Aorta (tissue), 5 donors: ENCODE measurements at regions of chr2 and their contacts with region 1.

Region 1: DNA sequence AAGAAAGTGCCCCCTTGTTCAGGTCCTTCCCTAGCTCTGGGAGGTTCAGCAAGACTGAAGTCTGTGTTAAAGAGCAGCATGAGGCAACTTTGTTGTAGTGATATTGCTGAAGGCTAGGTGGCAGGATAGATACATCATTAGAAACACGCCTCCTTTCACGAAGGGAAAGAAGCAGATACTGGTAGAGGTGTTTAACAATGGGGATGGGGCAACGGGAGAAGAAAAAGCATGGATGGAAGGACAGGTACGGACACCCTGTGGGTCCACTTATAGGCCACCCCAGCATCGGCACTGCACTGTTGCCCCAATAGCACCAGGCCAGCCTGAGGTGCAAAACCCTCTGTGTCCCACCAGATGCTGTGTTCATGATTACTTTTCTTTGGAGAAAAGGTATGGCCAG is 3.5 kb upstream of the IGFBP5 start:
- DNase-seq: peak in 1 of 2 donors; percentile 49
- ATAC-seq: peak; percentile 49
- H3K4me3 ChIP-seq: no peak overlapping the region
- H3K27ac ChIP-seq: no peak overlapping the region
- H3K4me1 ChIP-seq: peaks cover 0 to 7% of the 10 kb centered on the region in 2 donors
- H3K27me3 ChIP-seq: no peaks in the 10 kb centered on the region

Region 2: DNA sequence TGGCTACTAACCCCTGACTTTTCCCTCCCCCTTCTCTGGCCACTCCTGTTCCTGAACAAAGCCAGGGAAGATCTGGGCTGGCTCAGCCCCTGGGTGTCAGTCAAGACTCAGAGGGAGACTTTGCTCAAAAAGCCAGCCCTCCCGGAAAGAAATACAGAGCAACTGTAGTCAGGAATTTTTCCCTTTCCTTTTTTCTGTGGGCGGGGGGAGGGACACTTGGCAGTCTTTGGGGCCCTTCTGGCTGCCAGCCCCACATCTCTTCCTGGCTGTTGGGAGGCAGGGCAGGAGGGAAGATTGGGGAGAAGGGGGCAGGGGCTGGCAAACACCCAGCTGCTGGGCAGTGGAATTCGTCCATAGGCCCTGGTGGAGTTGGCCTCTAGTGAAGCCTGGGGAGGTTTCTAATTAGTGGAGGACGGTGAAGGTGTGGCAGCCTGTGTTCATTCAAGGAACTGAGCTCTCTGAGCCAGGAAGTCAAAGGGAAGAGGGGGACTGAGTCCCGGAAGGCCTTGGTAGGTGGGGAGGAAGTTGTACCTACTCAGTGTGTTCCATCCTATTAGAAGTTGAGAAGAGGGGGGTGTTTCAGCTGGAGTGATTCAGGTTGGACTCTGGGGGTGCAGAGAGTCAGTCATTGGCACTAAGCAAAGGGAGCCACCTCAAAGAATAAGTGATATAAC is 54.8 kb before region 1 on chr2:
- intact Hi-C with region 1: no loop called
- DNase-seq: peak; percentile 69 to 76
- ATAC-seq: no peak
- H3K4me3 ChIP-seq: no peak overlapping the region
- H3K27ac ChIP-seq: peak overlapping the region; percentile 58 to 62
- H3K4me1 ChIP-seq: peaks cover 7 to 13% of the 10 kb centered on the region in 2 donors
- H3K27me3 ChIP-seq: no peaks in the 10 kb centered on the region

Region 3: DNA sequence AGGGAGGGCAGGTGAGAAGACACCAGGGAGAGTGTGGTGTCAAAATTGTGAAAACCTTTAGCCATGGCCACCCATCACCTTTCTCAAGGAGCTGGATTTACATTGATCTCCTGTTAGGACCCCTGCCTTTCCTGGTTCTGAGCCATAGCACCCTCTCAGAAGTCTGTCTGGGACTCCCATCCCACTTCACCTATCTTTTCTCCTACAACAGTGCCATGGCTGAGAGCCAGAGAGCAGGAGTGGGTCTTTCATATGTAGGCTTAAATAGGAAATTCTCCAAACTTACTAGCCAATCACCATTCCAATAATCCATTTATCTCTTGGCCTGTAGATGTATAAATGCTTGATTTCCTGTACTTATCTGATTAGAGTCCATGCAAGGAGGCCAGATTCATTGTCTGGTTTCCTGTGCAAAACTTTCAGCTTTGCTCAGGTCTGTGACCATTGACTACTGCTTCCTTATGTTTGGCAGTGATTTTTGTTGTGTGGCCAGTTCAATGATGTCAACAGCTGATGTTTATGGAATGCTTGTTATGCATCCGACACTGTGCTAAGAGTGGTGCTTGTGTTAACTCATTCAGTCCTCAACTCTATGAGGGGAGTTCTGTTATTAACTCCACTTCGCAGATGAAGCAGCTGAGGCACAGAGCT is 54.1 kb after region 1 on chr2:
- intact Hi-C with region 1: no loop called
- DNase-seq: no peak
- ATAC-seq: no peak
- H3K4me3 ChIP-seq: no peak overlapping the region
- H3K27ac ChIP-seq: no peak overlapping the region
- H3K4me1 ChIP-seq: no peaks in the 10 kb centered on the region
- H3K27me3 ChIP-seq: no peaks in the 10 kb centered on the region

Region 4: GRCh38 chr2:216880509-216881184 is 181.8 kb after region 1 on chr2:
- intact Hi-C with region 1: loop called in 1 of 2 experiments (anchors 5 kb)
- DNase-seq: peak in 1 of 2 donors; percentile 78
- ATAC-seq: peak; percentile 73
- H3K4me3 ChIP-seq: no peak overlapping the region
- H3K27ac ChIP-seq: no peak overlapping the region
- H3K4me1 ChIP-seq: no peaks in the 10 kb centered on the region
- H3K27me3 ChIP-seq: no peaks in the 10 kb centered on the region

Region 5: GRCh38 chr2:217105733-217106649 is 407.1 kb after region 1 on chr2:
- intact Hi-C with region 1: loop called (anchors 5 kb)
- DNase-seq: peak; percentile 80 to 88
- ATAC-seq: peak; percentile 76
- H3K4me3 ChIP-seq: no peak overlapping the region
- H3K27ac ChIP-seq: peak overlapping the region; percentile 95 to 99
- H3K4me1 ChIP-seq: peaks cover 0 to 5% of the 10 kb centered on the region in 2 donors
- H3K27me3 ChIP-seq: no peaks in the 10 kb centered on the region

Region 6: DNA sequence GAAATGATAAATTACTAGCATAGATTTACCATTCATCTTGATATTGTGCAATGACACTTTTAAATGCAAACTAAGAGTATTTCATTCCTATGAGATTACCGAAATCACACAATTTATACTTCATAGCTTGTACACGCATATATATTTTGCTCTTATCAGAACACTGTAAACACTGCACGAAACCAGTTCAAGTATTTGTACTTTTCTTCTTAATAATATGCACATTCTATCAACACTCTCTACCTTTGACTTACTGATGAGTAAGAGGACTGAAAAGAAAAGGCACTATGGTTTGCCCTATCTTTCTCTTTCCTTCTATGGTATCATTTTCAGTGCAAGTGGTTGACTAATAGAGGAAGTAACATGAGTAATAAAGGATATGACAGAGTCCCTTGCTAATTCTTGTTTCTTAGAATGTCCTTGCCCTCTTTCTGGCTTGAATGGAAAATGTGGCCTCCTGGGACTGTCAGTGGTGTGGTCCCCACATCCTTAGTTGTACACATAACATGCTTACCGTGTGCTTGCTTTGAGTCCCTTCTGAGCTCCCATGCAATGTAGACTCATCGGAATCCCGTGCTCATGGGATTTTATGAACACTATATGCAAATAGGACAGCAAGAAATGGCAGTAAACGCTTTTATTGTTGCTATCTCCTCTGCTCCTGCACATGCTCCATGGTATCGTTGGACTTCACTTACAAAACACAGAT is 524.5 kb after region 1 on chr2:
- intact Hi-C with region 1: loop called in 1 of 2 experiments (anchors 10 kb)
- DNase-seq: peak in 1 of 2 donors; percentile 66
- ATAC-seq: peak; percentile 66
- H3K4me3 ChIP-seq: no peak overlapping the region
- H3K27ac ChIP-seq: peak overlapping the region; percentile 11 to 21
- H3K4me1 ChIP-seq: peaks cover 4 to 6% of the 10 kb centered on the region in 2 donors
- H3K27me3 ChIP-seq: no peaks in the 10 kb centered on the region

Region 7: DNA sequence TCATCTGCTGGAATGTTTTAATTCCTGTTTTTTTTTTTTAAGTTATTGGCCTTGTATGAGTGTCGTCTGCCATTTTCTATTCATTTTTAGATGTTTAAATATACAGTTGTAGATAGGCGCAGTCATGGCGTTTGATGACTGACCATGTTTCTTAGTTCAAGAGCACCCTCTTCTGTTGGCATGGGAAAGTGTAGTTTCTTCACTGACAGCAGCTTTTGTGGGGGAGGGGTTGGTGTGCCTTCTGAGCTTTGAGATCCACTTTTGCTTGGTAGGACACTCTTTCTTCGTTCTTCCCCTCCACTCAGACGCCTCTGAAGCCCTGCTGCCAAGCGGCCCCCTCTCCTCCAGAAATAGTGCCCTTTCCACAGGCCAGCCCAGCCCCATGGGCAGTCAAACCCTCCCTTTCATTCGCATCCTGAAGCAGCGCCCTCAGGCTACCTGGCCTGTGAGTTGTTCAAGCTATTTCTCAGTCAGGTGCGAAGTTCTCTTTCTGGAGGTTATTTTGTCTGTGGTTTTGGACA is 811.9 kb after region 1 on chr2:
- intact Hi-C with region 1: loop called (anchors 2 to 5 kb)
- DNase-seq: peak in 1 of 2 donors; percentile 57
- ATAC-seq: peak; percentile 89
- H3K4me3 ChIP-seq: no peak overlapping the region
- H3K27ac ChIP-seq: no peak overlapping the region
- H3K4me1 ChIP-seq: no peaks in the 10 kb centered on the region
- H3K27me3 ChIP-seq: no peaks in the 10 kb centered on the region